Heart left ventricle (tissue), 16 donors: ENCODE measurements at regions of chr11 and their contacts with region 1.

Region 1: GRCh38 chr11:123261345-123262106 is 66.5 kb upstream of the CLMP start:
- DNase-seq: peak; percentile 72 to 89 (median 80)
- ATAC-seq: peak; percentile 81 to 95 (median 90)
- H3K4me3 ChIP-seq: peak overlapping the region in 9 of 12 donors; percentile 13 to 45 (median 34)
- H3K27ac ChIP-seq: no peak overlapping the region
- H3K4me1 ChIP-seq: peaks cover 0 to 12% (median 0%) of the 10 kb centered on the region in 12 donors
- H3K27me3 ChIP-seq: peaks cover 0 to 15% (median 0%) of the 10 kb centered on the region in 9 donors
- CTCF ChIP-seq: peak; percentile 86 to 95 (median 92)
- POLR2A ChIP-seq: no peak

Region 2: GRCh38 chr11:123103326-123103980 is 158.1 kb before region 1 on chr11:
- intact Hi-C with region 1: loop called in 2 of 10 experiments (anchors 5 kb)
- DNase-seq: peak in 4 of 5 donors; percentile 54 to 75 (median 72)
- ATAC-seq: peak; percentile 83 to 94 (median 88)
- H3K4me3 ChIP-seq: peak overlapping the region in 1 of 12 donors; percentile 5
- H3K27ac ChIP-seq: peak overlapping the region; percentile 18 to 72 (median 58)
- H3K4me1 ChIP-seq: peaks cover 0 to 43% (median 21%) of the 10 kb centered on the region in 12 donors
- H3K27me3 ChIP-seq: no peaks in the 10 kb centered on the region
- CTCF ChIP-seq: peak; percentile 51 to 77 (median 66)
- POLR2A ChIP-seq: no peak